Activated T-helper 1 cell treated with anti-CD3 and anti-CD28 coated beads, Interleukin-12 subunit alpha, Interleukin-12 subunit beta, Interleukin-2, Interleukin-4 antibody, amounts not matched to agents 30 ng/mL and 10 ng/mL and 1 ng/mL, durations not matched to agents 14 hours and 24 hours and 36 hours (primary cell): ENCODE measurements at regions of chr9 and their contacts with region 1.

Region 1: DNA sequence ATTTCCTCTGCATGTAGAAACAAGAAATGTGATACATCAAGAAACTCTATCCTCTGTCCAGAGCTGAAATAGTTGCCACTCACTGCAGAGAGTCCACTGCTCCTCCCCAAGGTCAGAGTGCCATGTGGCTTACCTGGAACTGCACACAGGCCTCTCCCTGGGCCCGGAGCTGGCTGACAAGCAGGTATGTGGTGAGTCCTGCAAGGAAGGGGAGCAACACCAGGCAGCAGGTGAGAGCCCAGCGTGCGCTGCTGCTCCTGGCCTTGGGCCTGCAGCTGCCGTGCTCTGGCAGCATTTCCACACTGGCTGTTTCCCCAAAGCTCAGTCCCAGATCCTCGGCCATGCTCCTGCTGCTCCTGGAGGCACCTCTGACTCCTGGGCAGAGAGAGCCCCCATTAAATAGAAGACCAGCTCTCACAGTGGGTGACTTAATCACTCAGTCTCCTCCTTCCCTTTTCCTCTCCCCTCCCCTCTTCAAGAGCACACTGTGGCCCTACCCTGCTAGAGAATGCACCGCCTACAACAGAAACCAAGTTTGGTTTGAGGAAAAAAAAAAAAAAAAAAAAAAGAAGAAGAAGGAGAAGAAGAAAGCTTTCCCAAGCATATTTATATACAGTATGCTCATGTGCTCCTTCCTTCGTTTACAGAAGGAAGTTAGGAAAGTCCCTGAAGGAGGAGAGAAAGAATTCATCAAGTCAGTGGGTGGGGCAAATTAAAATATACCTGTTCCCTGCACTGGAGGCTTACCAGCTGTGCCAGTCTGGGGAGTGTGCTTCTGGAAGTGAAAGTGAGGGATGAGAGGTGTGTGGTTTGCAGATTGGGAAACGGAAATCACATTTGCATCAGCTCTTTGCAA is at the start of gene TNFSF15:
- DNase-seq: peak; percentile 22
- H3K4me3 Mint-ChIP-seq: peak within 1 kb of the TSS; percentile 74
- H3K27ac Mint-ChIP-seq: peak within 1 kb of the TSS; percentile 41
- H3K4me1 Mint-ChIP-seq: peaks cover 34% of the 10 kb centered on the region
- H3K27me3 Mint-ChIP-seq: no peaks in the 10 kb centered on the region
- total RNA-seq, gene TNFSF15: 1.4 and 1.5 TPM in 2 replicates

Region 2: DNA sequence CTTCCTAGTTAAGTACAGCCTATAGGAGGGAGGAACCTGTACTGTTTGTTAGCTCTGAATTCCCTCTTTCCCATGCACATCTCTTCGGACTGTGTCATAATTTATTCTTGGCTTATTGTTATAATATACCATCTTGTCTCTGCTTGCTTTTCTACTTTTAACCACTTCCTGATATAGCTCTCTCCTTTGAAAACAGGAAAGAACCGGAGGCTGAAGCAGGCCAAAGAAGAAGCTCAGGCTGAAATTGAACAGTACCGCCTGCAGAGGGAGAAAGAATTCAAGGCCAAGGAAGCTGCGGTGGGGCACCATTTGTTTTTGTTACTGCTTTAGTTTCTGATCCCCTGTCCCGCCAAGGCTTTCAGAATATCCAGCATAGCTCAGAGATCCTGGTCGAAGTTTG is 213.5 kb before region 1 on chr9:
- intact Hi-C with region 1: no loop called
- DNase-seq: peak; percentile 58
- H3K4me3 Mint-ChIP-seq: peak overlapping the region; percentile 76
- H3K27ac Mint-ChIP-seq: peak overlapping the region; percentile 85
- H3K4me1 Mint-ChIP-seq: peaks cover 66% of the 10 kb centered on the region
- H3K27me3 Mint-ChIP-seq: no peaks in the 10 kb centered on the region

Region 3: GRCh38 chr9:114681594-114682332 is 124.1 kb before region 1 on chr9 and contains the start of gene TEX48:
- intact Hi-C with region 1: loop called (anchors 1 kb)
- DNase-seq: peak; percentile 76
- H3K4me3 Mint-ChIP-seq: peak within 1 kb of the TSS; percentile 49
- H3K27ac Mint-ChIP-seq: peak within 1 kb of the TSS; percentile 97
- H3K4me1 Mint-ChIP-seq: peaks cover 81% of the 10 kb centered on the region
- H3K27me3 Mint-ChIP-seq: no peaks in the 10 kb centered on the region
- total RNA-seq, gene TEX48: 1.0 and 1.2 TPM in 2 replicates

Region 4: DNA sequence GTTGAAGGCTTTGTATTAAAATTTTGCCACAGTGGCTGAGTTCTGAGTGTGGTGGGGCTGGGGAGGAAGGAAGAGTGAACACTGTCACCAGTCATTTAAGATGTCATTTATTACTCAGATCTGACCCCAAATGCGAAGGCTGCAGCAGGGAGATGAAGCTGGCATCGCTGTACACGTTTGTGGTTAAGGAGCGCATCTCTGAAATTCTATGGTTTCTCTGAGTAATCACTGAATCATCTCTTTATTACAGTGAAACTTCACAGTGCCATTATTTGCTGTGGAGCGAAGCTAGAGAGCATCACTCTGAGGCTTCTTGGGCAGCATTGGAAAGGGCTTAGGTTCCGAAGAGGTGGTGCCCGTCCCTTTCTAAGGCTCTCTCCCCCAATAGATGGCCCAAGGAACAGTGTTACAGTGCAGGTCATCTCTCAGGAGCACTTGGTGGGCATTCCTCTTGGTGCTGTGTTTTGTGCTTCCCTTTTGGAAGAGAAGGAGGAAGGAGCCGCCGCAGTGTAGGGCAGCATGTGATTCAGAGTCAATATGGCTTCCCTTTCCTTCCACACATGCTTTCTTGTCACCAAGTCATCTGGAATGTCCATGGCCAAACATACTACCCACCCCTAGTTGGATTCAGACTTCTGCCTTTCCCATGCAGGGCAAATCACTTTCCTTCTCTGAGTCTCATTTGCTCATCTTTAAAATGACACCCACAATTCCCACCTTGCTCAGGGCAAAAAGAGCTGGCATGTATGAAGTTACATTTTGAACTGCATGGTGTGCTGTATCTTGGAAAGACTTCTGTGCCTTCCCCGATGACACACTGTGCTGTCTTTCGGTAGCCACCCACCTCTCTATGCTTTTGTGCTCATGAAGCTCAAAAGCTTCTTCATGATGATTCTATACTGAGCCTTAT is 114.6 kb before region 1 on chr9:
- intact Hi-C with region 1: loop called (anchors 2 kb)
- DNase-seq: peak; percentile 80
- H3K4me3 Mint-ChIP-seq: peak overlapping the region; percentile 69
- H3K27ac Mint-ChIP-seq: peak overlapping the region; percentile 98
- H3K4me1 Mint-ChIP-seq: peaks cover 93% of the 10 kb centered on the region
- H3K27me3 Mint-ChIP-seq: no peaks in the 10 kb centered on the region

Region 5: DNA sequence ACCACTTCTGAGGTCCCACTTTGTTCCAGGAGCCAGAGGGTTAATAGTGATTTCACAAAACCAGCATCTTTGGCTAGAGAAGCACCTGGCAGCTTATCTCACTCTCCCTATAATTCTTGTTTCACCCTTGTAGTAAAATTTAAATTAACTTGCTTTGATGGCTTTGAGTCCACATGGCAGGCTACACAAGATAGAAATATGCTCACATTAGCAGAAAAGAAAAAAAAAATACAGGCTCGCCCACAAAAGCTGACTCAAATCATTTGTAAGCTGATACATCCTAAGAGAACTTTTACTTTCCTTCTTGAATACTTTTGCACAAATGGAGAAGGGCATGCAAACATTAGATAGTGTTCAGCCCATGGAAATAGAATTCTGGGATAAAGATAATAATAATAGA is 36.3 kb before region 1 on chr9:
- intact Hi-C with region 1: loop called (anchors 2 kb)
- DNase-seq: no peak
- H3K4me3 Mint-ChIP-seq: no peak overlapping the region
- H3K27ac Mint-ChIP-seq: no peak overlapping the region
- H3K4me1 Mint-ChIP-seq: peaks cover 14% of the 10 kb centered on the region
- H3K27me3 Mint-ChIP-seq: peaks cover 4% of the 10 kb centered on the region

Region 6: DNA sequence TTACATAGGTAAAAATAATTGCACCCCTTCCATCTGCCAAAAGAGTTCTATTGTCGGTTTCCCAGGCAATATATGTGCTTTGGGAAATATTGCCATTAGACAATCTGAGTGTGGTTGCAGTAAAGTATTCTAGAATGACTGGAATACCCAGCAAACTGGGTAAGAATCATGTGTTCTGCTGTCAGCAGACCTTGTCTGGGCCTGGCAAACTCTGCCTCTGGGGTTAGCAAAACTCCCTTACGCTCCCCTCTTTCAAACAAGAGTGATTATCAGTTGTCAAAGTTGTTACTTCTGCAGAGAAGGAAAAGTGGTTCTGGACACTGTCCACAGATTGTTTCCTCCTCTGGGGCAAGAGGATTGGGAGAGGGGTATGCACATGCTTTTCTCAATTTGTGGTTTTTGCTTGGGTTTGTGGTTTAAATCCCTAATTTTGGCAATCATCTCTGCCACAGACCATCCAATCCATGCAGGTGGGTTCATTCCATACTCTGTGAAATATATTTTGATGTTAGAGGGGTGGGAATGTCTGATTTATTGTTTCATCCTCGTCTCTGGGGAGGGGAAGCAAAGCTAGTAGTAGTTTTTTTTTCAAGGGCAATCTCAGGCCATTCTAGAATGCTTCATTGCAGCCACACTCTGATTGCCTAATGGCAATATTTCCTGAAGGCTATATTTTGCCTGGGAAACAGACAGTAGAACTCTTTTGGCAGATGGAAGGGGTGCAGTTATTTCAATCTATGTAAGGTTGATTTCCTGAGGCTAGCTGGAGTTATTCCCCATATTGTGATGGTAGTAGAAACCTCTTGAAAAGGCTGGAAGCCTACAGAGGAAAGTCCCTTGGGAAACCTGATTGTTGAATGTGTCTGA is 23.9 kb after region 1 on chr9:
- intact Hi-C with region 1: loop called (anchors 2 kb)
- DNase-seq: no peak
- H3K4me3 Mint-ChIP-seq: no peak overlapping the region
- H3K27ac Mint-ChIP-seq: no peak overlapping the region
- H3K4me1 Mint-ChIP-seq: peaks cover 17% of the 10 kb centered on the region
- H3K27me3 Mint-ChIP-seq: peaks cover 2% of the 10 kb centered on the region

Region 7: GRCh38 chr9:114860187-114860586 is 54.3 kb after region 1 on chr9:
- intact Hi-C with region 1: loop called (anchors 1 kb)
- DNase-seq: no peak
- H3K4me3 Mint-ChIP-seq: no peak overlapping the region
- H3K27ac Mint-ChIP-seq: no peak overlapping the region
- H3K4me1 Mint-ChIP-seq: peaks cover 22% of the 10 kb centered on the region
- H3K27me3 Mint-ChIP-seq: peaks cover 9% of the 10 kb centered on the region

Region 8: DNA sequence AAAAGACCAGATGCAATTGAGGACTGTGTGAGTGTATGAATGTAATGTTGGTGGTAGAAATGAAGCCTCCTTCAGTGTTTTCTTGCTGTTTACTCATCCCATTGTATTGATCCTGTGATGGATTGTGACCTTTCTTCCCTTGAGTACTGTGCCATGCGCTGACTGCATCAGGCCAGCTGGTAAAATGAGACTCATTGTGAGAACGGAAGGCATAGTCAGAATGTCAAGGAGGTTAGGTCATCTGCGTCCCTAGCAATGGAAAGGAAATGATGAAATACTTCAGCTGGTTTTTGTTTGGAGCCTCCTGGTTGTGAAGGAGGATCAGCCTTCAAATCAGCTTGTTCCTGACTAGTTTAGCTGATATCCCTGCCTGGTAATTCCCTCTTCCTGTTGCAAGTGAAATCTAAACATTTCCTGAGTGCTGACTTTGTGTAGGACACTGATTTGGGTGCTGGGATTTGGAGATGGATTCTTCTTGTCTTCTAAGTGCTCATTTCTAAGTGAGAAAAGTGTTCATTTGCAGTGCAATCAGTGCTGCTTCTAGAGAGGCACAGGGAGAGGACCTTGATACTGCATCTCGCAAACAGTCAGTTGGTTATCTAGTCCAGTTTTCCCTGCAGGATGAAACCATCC is 89.0 kb after region 1 on chr9:
- intact Hi-C with region 1: loop called (anchors 2 kb)
- DNase-seq: peak; percentile 54
- H3K4me3 Mint-ChIP-seq: peak overlapping the region; percentile 16
- H3K27ac Mint-ChIP-seq: peak overlapping the region; percentile 90
- H3K4me1 Mint-ChIP-seq: peaks cover 57% of the 10 kb centered on the region
- H3K27me3 Mint-ChIP-seq: no peaks in the 10 kb centered on the region